CD4-positive, alpha-beta memory T cell (primary cell): ENCODE measurements at regions of chr13 and their contacts with region 1.

Region 1: DNA sequence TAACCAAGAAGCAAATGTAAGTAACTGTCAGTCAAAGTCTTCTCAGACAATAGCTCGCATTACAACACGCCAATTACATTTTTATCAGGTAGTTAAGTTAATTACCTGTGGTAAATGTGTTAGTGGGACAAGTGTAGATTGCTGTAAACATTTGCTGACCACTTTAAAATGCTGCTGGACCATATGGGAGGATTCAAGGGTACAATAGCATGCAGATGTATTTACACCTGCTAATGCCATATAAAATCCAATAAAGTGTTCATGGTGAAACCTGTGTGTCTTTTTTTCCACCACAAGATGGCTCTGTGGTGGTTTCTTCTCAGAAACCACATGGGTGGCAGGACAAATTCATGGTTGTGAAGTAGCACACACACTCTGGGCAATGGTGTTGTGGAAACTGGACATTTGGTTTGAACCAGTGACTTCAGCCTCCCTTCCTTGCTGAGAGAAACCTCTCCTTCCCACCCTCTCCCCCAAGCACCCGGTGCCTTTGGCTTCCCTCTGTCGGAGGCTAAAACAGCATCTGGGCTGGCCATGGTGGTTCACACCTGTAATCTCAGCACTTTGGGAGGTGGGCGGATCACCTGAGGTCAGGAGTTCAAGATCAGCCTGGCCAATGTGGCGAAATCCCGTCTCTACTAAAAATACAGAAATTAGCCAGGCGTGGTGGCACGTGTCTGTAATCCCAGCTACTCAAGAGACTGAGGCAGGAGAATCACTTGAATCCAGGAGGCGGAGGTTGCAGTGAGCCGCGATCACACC is 18.1 kb upstream of the GTF3A start:
- DNase-seq: peak; percentile 49 to 60 (median 56)
- H3K4me3 ChIP-seq: no peak overlapping the region
- H3K4me3 Mint-ChIP-seq: peak overlapping the region in 1 of 8 donors; percentile 71
- H3K27ac ChIP-seq: no peak overlapping the region
- H3K27ac Mint-ChIP-seq: no peak overlapping the region
- H3K4me1 ChIP-seq: peaks cover 3% of the 10 kb centered on the region
- H3K4me1 Mint-ChIP-seq: peaks cover 2 to 6% (median 4%) of the 10 kb centered on the region in 4 donors
- H3K27me3 ChIP-seq: no peaks in the 10 kb centered on the region
- H3K27me3 Mint-ChIP-seq: peaks cover 10 to 13% of the 10 kb centered on the region in 2 donors

Region 2: DNA sequence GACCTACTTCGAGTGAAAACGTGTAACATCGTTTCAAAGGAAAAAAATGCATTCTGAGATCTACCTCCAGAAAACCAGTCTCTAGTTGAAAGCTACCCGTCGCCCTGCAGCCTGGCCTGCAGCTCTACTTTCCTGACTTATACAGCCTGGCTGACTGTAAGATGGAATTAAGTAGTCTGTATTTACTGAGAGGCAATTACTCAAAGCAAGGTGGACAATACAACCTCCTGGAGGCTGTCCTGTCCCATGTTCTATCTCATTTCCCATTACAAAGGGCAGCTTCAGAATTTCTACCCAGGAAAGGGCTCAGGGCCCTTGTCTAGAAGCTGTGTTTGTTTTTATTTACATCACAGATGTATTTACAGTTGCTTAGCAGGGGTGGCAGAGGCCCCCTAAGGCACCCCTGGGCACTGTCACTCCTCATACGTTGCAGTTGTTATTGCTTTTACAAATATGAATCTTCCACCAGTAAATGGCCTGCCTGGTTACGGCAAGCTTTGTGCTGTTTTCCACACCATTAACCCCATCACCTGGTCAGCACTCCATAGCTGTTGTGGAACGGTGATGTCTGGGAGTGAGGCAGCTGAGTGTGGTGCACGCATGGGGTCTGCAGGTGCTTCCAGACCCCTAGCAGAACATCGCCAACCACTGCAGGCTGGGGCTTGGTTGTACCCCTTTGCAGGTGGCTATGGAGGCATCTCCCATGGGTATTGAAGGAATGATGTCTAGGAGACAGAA is 90.3 kb after region 1 on chr13:
- CTCF ChIA-PET with region 1: no interaction called
- POLR2A ChIA-PET with region 1: no interaction called
- intact Hi-C with region 1: no loop called
- DNase-seq: no peak
- H3K4me3 ChIP-seq: no peak overlapping the region
- H3K4me3 Mint-ChIP-seq: no peak overlapping the region
- H3K27ac ChIP-seq: no peak overlapping the region
- H3K27ac Mint-ChIP-seq: no peak overlapping the region
- H3K4me1 ChIP-seq: no peaks in the 10 kb centered on the region
- H3K4me1 Mint-ChIP-seq: no peaks in the 10 kb centered on the region
- H3K27me3 ChIP-seq: no peaks in the 10 kb centered on the region
- H3K27me3 Mint-ChIP-seq: peaks cover 0 to 4% of the 10 kb centered on the region in 2 donors

Region 3: DNA sequence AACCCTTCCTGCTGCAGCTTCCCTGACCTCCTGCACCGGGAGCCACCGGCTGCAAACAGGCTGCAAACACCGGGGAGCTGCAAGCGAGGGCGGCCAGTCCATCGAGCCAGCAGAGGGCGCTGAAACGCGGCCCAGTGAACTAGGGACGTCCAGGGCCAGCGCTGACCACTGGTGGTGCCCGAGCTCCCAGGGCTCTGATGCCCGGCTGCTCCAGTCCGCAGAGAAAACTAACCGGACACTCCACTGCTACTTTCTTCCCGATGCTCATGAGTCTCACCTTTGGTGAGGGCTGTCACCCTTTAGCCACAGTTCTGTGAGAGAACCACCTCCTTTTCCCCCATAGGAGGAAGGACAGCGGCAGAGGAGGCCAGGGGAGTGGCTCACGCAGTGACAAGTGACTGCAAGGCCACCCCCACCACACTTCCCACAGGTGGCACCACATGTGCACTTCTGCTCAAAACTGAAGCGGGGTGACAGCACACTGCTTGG is 126.8 kb after region 1 on chr13:
- CTCF ChIA-PET with region 1: interaction called, 5 read pairs
- POLR2A ChIA-PET with region 1: no interaction called
- intact Hi-C with region 1: loop called (anchors 1 kb)
- DNase-seq: peak; percentile 21 to 53 (median 33)
- H3K4me3 ChIP-seq: no peak overlapping the region
- H3K4me3 Mint-ChIP-seq: peak overlapping the region in 3 of 8 donors; percentile 21 to 57 (median 41)
- H3K27ac ChIP-seq: no peak overlapping the region
- H3K27ac Mint-ChIP-seq: no peak overlapping the region
- H3K4me1 ChIP-seq: peaks cover 8% of the 10 kb centered on the region
- H3K4me1 Mint-ChIP-seq: peaks cover 6 to 12% (median 8%) of the 10 kb centered on the region in 4 donors
- H3K27me3 ChIP-seq: no peaks in the 10 kb centered on the region
- H3K27me3 Mint-ChIP-seq: peaks cover 0 to 1% of the 10 kb centered on the region in 2 donors